ENCODE measurements at regions of chr1 and their contacts with region 1.

Region 1: GRCh38 chr1:163163861-163164582 is 38.7 kb downstream of the RGS5 start:
- DNase-seq: no peak
- ATAC-seq: no peak
- H3K4me3 ChIP-seq: no peak overlapping the region
- H3K4me3 Mint-ChIP-seq: no peak overlapping the region
- H3K27ac ChIP-seq: no peak overlapping the region
- H3K27ac Mint-ChIP-seq: no peak overlapping the region
- H3K4me1 ChIP-seq: no peaks in the 10 kb centered on the region
- H3K4me1 Mint-ChIP-seq: no peaks in the 10 kb centered on the region
- H3K27me3 ChIP-seq: no peaks in the 10 kb centered on the region
- H3K27me3 Mint-ChIP-seq: no peaks in the 10 kb centered on the region
- CTCF ChIP-seq: no peak

Region 2: GRCh38 chr1:162062542-162063015 is 1101.4 kb before region 1 on chr1:
- CTCF ChIA-PET with region 1: no interaction called
- POLR2A ChIA-PET with region 1: no interaction called
- intact Hi-C with region 1: loop called in 1 of 2 experiments (anchors 5 kb)
- DNase-seq: no peak
- ATAC-seq: no peak
- H3K4me3 ChIP-seq: no peak overlapping the region
- H3K4me3 Mint-ChIP-seq: no peak overlapping the region
- H3K27ac ChIP-seq: no peak overlapping the region
- H3K27ac Mint-ChIP-seq: no peak overlapping the region
- H3K4me1 ChIP-seq: no peaks in the 10 kb centered on the region
- H3K4me1 Mint-ChIP-seq: no peaks in the 10 kb centered on the region
- H3K27me3 ChIP-seq: peaks cover 5 to 6% of the 10 kb centered on the region in 2 experiments
- H3K27me3 Mint-ChIP-seq: peaks cover 43% of the 10 kb centered on the region
- CTCF ChIP-seq: no peak

Measured in CD8-positive, alpha-beta T cell (primary cell).